ENCODE measurements at regions of chr15 and their contacts with region 1.

Region 1: DNA sequence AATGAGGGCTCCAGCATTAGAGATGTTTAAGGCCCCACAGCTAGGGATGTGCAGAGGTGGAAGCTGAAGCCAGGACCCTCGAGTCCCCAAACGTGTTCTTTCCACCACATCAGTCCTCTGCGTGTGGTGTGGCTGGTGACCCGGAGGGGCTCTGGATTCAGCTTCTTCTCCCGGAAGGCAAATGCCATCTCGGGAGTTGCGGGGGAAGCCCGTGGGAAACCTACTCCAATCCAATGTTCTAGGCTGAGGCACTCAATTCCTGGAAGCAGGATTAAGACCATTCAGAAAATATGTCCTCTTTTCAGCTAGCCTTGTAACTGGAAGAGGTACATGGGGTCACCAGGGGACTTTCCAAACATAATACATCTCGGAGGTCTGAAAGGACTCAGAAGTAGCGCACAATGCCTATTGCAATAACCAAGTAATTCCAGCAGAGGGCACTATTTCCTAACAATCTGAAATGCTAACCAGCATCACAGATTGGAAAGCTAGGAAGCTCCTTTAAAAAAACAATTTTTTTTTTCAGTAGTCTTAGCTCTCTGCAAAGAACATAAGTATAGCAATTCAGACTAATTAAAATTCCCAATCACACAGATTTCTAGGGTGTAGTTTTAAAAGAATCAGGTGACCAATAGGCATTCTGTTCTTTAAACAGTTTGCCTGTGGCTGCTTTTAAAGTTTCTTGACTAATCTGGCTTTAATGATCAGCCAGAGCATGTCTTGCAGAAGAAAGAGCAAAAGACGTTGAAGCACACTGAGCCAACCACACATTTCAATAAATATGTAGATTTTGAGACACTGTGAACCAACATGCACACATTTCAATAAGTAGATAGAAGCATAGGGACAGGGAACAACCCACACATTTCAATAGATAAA is 36.1 kb downstream of the BNC1 start:
- DNase-seq: peak in 1 of 2 donors; percentile 37
- ATAC-seq: peak in 5 of 8 donors; percentile 46 to 62 (median 58)
- H3K4me3 ChIP-seq: no peak overlapping the region
- H3K27ac ChIP-seq: no peak overlapping the region
- H3K4me1 ChIP-seq: no peaks in the 10 kb centered on the region
- H3K27me3 ChIP-seq: peaks cover 0 to 61% (median 40%) of the 10 kb centered on the region in 7 donors
- CTCF ChIP-seq: peak; percentile 83 to 96 (median 94)

Region 2: DNA sequence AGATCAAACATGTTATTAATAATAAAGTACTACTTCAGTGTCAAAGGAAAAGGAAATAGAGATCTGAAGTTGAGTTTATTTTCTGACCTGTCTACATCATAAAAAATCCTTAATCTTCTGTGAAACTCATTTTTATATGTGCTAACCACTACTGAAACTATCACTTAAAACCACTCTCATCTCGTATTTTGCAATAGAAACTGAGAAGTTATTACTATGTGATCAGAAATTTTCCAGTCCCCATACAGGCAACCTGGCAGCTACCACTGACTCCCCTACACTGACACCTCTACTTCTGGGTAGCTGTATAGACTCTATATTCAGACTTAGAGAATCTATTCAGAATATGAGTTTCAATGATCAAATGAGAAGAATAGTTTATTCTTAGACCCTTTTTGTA is 49.1 kb before region 1 on chr15:
- intact Hi-C with region 1: no loop called
- DNase-seq: no peak
- ATAC-seq: no peak
- H3K4me3 ChIP-seq: no peak overlapping the region
- H3K27ac ChIP-seq: no peak overlapping the region
- H3K4me1 ChIP-seq: peaks cover 0 to 79% (median 35%) of the 10 kb centered on the region in 9 donors
- H3K27me3 ChIP-seq: no peaks in the 10 kb centered on the region
- CTCF ChIP-seq: no peak

Region 3: GRCh38 chr15:83380682-83381081 is 132.3 kb after region 1 on chr15:
- intact Hi-C with region 1: loop called (anchors 1 to 5 kb)
- DNase-seq: peak; percentile 31 to 32
- ATAC-seq: peak; percentile 62 to 83 (median 72)
- H3K4me3 ChIP-seq: no peak overlapping the region
- H3K27ac ChIP-seq: no peak overlapping the region
- H3K4me1 ChIP-seq: peaks cover 0 to 10% (median 6%) of the 10 kb centered on the region in 9 donors
- H3K27me3 ChIP-seq: peaks cover 18 to 78% (median 63%) of the 10 kb centered on the region in 7 donors
- CTCF ChIP-seq: peak in 8 of 9 donors; percentile 7 to 61 (median 50)

Region 4: GRCh38 chr15:83436458-83437158 is 188.2 kb after region 1 on chr15:
- intact Hi-C with region 1: loop called in 9 of 10 experiments (anchors 2 to 5 kb)
- DNase-seq: no peak
- ATAC-seq: peak in 3 of 8 donors; percentile 57 to 74 (median 62)
- H3K4me3 ChIP-seq: no peak overlapping the region
- H3K27ac ChIP-seq: no peak overlapping the region
- H3K4me1 ChIP-seq: no peaks in the 10 kb centered on the region
- H3K27me3 ChIP-seq: peaks cover 0 to 43% (median 21%) of the 10 kb centered on the region in 7 donors
- CTCF ChIP-seq: peak in 7 of 9 donors; percentile 39 to 53 (median 48)